ENCODE measurements at regions of chr20 and their contacts with region 1.

Region 1: DNA sequence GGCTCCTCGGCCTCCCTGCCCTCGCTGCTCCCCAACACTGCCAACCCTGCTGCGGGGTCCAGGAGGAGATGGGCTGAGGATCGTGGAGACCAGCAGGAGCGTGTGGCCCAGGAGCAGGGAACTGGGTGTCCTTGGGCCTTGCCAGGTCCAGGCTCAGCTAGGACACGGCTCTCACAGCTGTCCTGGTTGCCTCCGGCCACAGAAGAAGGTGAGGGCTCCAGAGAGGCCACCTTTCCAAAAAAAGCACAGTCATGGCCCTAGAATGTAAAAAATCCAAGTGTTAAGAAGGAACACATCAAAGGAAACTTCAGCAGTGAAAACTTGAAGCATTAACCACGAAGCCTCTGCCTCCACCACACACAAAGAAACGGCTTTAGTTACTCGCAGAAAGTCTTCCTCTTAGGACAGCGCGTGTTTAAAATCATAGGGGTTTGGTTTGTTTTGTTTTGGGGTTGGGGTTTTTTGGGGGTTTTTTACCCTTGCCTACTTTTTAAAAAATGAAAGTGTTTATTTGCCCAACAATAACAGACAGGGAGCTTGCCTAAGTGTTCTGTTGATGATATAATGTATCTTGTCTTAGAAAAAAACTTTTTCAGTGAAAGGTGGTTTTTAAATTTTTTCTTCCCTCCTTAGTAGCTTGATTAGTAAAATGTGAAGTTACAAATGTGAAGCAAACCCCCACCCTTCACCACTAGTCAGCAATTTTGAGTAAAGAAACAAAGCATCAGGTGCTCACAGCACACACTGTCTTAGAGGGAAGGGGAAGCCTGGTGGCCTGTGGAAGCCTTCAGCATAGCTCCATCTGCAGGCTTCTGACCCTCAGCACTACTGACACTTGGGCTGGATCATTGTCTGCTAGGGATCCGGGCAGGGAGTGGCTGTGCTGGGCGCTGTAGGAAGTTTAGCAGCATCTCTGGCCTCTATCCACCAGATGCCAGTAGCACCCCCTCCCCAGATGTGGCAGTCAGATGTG is 60.0 kb downstream of the PTPN1 start:
- DNase-seq: no peak
- ATAC-seq: peak; percentile 44 to 48 (median 44)
- H3K4me3 ChIP-seq: no peak overlapping the region
- H3K27ac ChIP-seq: peak overlapping the region; percentile 56
- H3K4me1 ChIP-seq: peaks cover 43% of the 10 kb centered on the region
- H3K27me3 ChIP-seq: no peaks in the 10 kb centered on the region
- CTCF ChIP-seq: no peak

Region 2: DNA sequence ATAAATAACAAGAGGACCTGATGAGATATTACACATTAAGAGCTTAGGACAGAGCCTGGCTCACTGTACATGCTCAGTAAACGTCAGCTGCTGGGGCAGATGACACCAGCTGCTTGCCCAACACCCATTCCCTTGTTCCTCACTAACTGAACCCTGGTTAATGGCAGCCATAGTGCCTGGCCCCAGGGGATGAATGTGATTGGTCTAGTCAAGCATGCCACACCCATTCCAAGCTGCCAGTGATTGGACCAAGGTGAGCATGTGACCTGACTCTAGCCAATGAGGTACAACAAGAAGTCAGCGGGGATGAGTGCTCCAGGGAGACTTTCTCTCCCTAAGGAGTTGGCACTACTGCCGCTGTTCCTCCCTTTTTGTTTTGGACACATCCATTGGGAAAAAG is 145.1 kb before region 1 on chr20:
- intact Hi-C with region 1: no loop called
- DNase-seq: peak; percentile 54 to 76
- ATAC-seq: peak in 3 of 4 donors; percentile 2 to 29 (median 26)
- H3K4me3 ChIP-seq: no peak overlapping the region
- H3K27ac ChIP-seq: no peak overlapping the region
- H3K4me1 ChIP-seq: peaks cover 45% of the 10 kb centered on the region
- H3K27me3 ChIP-seq: no peaks in the 10 kb centered on the region
- CTCF ChIP-seq: no peak

Region 3: GRCh38 chr20:50516180-50516934 is 53.8 kb before region 1 on chr20:
- intact Hi-C with region 1: loop called (anchors 2 to 5 kb)
- DNase-seq: no peak
- ATAC-seq: no peak
- H3K4me3 ChIP-seq: no peak overlapping the region
- H3K27ac ChIP-seq: peak overlapping the region; percentile 77
- H3K4me1 ChIP-seq: peaks cover 96% of the 10 kb centered on the region
- H3K27me3 ChIP-seq: no peaks in the 10 kb centered on the region
- CTCF ChIP-seq: no peak

Region 4: DNA sequence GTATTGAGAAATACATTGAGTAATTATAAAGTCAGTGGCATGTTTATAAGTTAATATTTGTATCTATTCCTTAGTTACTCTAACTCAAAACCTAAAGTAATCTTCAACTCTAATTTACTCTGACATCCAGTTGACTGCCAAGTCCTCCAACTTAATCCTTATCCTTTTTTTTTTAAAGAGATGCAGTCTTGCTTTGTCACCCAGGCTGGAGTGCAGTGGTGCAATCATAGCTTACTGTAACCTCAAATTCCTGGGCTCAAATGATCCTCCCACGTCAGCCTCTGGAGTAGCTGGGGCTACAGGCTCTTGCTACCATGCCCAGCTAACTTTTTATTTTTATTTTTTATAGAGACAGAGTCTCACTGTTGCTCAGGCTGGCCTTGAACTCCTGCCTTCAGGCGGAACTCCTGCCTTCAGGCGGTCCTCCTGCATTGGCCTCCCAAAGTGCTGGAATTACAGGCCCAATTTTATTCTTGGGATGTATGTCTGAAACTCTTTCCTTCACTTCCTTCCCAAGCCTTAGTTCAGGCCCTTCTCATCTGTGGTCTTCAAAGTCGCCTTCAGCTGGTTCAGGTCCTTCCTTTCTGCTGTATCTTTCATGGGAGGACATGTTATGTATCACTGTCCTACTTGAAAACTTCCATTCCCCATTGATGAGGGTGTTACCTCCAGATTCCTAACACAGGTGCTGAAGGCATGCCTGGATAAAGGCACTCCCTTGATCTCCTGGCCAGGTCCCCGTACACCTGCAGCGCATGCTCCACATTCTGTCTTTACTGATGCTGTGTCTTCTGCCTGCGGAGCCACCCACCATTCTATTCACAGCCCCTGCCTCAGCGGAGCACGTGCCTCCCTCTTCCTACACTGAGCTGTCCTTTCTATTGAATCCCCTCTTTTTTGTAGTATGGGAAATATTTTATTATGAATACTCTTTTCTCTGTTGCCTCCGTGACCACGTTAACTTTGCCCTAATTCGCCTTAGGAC is 35.3 kb before region 1 on chr20:
- intact Hi-C with region 1: loop called in 1 of 2 experiments (anchors 5 kb)
- DNase-seq: peak in 1 of 2 donors; percentile 30
- ATAC-seq: peak; percentile 61 to 87 (median 80)
- H3K4me3 ChIP-seq: no peak overlapping the region
- H3K27ac ChIP-seq: peak overlapping the region; percentile 38
- H3K4me1 ChIP-seq: peaks cover 58% of the 10 kb centered on the region
- H3K27me3 ChIP-seq: no peaks in the 10 kb centered on the region
- CTCF ChIP-seq: no peak

Measured in psoas muscle (tissue), 8 donors.